Activated B cell treated with CpG ODN at 0.5 μM for 24 hours (primary cell): ENCODE measurements at regions of chr10 and their contacts with region 1.

Region 1: DNA sequence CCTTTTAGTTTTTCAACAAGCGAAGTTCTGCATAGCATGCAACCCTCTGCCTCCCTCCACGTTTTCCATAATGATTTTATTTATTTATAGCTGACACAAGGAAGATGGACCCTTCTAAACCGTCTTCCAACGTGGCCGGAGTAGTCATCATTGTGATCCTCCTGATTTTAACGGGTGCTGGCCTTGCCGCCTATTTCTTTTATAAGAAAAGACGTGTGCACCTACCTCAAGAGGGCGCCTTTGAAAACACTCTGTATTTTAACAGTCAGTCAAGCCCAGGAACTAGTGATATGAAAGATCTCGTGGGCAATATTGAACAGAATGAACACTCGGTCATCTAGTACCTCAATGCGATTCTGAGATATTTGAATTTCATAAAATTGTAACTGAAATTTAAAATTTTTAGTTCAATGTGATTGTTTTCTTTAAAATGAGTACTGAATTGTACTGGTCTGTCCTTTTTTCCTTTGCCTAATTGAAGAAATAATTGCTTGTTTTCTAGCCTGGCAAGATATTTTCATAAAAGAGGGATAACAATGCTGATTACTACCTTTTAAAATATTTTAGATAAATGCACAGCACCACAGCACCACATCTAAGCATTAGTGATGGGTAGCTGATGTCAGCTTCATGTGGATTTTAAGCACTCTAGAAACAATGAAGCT is 41.5 kb upstream of the SLC39A12 start:
- DNase-seq: no peak
- ATAC-seq: no peak
- H3K4me3 Mint-ChIP-seq: no peak overlapping the region
- H3K27ac Mint-ChIP-seq: no peak overlapping the region
- H3K4me1 Mint-ChIP-seq: no peaks in the 10 kb centered on the region
- H3K27me3 Mint-ChIP-seq: peaks cover 7% of the 10 kb centered on the region
- CTCF ChIP-seq: no peak

Region 2: GRCh38 chr10:18104223-18104872 is 194.1 kb after region 1 on chr10:
- CTCF ChIA-PET with region 1: interaction called, 5 read pairs
- POLR2A ChIA-PET with region 1: no interaction called
- intact Hi-C with region 1: loop called (anchors 1 kb)
- DNase-seq: no peak
- ATAC-seq: no peak
- H3K4me3 Mint-ChIP-seq: no peak overlapping the region
- H3K27ac Mint-ChIP-seq: no peak overlapping the region
- H3K4me1 Mint-ChIP-seq: no peaks in the 10 kb centered on the region
- H3K27me3 Mint-ChIP-seq: no peaks in the 10 kb centered on the region
- CTCF ChIP-seq: no peak

Region 3: GRCh38 chr10:18214691-18215563 is 304.7 kb after region 1 on chr10:
- CTCF ChIA-PET with region 1: no interaction called
- POLR2A ChIA-PET with region 1: no interaction called
- intact Hi-C with region 1: loop called (anchors 1 kb)
- DNase-seq: no peak
- ATAC-seq: no peak
- H3K4me3 Mint-ChIP-seq: no peak overlapping the region
- H3K27ac Mint-ChIP-seq: no peak overlapping the region
- H3K4me1 Mint-ChIP-seq: no peaks in the 10 kb centered on the region
- H3K27me3 Mint-ChIP-seq: no peaks in the 10 kb centered on the region
- CTCF ChIP-seq: no peak

Region 4: GRCh38 chr10:18238870-18239485 is 328.7 kb after region 1 on chr10:
- CTCF ChIA-PET with region 1: no interaction called
- POLR2A ChIA-PET with region 1: no interaction called
- intact Hi-C with region 1: loop called (anchors 1 kb)
- DNase-seq: no peak
- ATAC-seq: no peak
- H3K4me3 Mint-ChIP-seq: no peak overlapping the region
- H3K27ac Mint-ChIP-seq: no peak overlapping the region
- H3K4me1 Mint-ChIP-seq: no peaks in the 10 kb centered on the region
- H3K27me3 Mint-ChIP-seq: peaks cover 1% of the 10 kb centered on the region
- CTCF ChIP-seq: no peak

Region 5: GRCh38 chr10:18312374-18313139 is 402.3 kb after region 1 on chr10:
- CTCF ChIA-PET with region 1: no interaction called
- POLR2A ChIA-PET with region 1: no interaction called
- intact Hi-C with region 1: loop called (anchors 1 kb)
- DNase-seq: no peak
- ATAC-seq: peak; percentile 50
- H3K4me3 Mint-ChIP-seq: no peak overlapping the region
- H3K27ac Mint-ChIP-seq: no peak overlapping the region
- H3K4me1 Mint-ChIP-seq: no peaks in the 10 kb centered on the region
- H3K27me3 Mint-ChIP-seq: peaks cover 3% of the 10 kb centered on the region
- CTCF ChIP-seq: no peak